Dendritic cell treated with granulocyte-macrophage colony-stimulating factor and Interleukin-4, amounts not matched to agents 40 ng/mL and 50 ng/mL, for 4 days (primary cell): ENCODE measurements at regions of chr6 and their contacts with region 1.

Region 1: DNA sequence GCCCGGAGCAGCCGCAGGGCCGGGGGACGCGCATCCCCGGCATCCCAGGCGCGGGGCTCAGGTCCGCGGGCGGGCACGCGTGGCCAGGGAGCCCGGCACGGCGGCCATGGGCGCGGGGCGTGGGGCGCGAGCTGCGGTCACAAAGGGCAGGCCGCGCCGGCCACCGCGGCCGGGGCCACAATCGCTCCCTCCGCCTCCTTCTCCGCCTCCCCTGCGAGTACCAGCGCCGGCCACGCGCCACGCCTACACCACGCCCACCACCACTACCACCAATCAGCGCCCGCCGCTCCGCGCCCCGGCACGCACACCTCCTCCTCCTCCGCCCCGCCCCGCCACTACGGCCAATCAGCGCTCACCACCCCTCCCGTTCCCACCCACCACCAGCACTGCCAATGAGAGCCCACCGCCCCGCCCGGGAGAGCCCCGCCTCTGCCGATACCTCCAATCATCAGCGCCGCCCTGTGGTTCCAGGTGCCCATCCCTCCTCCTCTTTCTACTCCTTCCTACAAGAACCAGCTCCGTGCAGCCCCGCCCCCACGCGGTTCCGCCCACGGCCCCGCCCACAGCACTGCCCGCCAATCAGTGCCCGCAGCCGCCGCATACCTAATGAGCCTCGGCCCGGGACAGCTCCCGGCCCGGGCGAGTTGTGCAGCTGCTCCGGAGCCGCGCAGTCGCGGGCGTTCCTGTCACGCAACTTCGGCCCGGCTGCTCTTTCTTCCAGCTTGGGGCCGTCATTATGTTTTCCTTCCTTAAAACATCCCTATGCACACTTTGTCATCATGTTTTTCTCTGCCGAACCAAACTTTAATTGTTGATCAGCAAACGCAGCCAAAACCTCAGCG is at the start of gene RPS6KA2:
- H3K4me3 Mint-ChIP-seq: peak within 1 kb of the TSS; percentile 88
- H3K27ac Mint-ChIP-seq: peak within 1 kb of the TSS; percentile 94
- H3K4me1 Mint-ChIP-seq: peaks cover 30% of the 10 kb centered on the region
- H3K27me3 Mint-ChIP-seq: peaks cover 51% of the 10 kb centered on the region

Region 2: DNA sequence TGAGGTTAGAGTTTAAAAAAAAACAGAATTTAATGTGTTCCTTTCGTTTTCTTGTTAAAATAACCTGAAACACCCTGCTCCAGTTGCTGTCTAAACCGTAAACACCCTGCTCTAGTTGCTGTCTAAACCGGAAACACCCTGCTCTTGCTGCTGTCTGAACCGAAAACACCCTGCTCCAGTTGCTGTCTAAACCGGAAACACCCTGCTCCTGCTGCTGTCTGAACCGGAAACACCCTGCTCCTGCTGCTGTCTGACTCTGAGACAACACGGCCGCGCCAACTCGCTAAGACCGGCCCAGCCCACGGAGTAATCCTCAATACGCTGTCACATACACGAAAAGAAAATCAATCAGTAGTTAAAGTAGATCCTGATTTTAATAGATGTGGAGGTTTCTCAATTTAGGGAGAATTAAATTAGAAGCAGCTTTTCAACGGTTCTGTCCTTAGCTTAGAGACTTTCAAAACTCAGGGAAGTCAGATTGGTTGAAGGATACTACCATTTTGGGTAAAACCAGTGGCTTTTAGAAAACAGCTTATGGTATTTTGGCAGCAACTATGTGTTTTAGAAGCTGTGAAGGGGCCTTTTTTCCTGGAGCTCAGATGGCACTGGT is 139.1 kb before region 1 on chr6:
- intact Hi-C with region 1: loop called (anchors 2 kb)
- H3K4me3 Mint-ChIP-seq: peak overlapping the region; percentile 44
- H3K27ac Mint-ChIP-seq: peak overlapping the region; percentile 85
- H3K4me1 Mint-ChIP-seq: peaks cover 6% of the 10 kb centered on the region
- H3K27me3 Mint-ChIP-seq: no peaks in the 10 kb centered on the region

Region 3: GRCh38 chr6:166671434-166672081 is 44.3 kb after region 1 on chr6:
- intact Hi-C with region 1: no loop called
- H3K4me3 Mint-ChIP-seq: no peak overlapping the region
- H3K27ac Mint-ChIP-seq: no peak overlapping the region
- H3K4me1 Mint-ChIP-seq: no peaks in the 10 kb centered on the region
- H3K27me3 Mint-ChIP-seq: peaks cover 38% of the 10 kb centered on the region

Region 4: DNA sequence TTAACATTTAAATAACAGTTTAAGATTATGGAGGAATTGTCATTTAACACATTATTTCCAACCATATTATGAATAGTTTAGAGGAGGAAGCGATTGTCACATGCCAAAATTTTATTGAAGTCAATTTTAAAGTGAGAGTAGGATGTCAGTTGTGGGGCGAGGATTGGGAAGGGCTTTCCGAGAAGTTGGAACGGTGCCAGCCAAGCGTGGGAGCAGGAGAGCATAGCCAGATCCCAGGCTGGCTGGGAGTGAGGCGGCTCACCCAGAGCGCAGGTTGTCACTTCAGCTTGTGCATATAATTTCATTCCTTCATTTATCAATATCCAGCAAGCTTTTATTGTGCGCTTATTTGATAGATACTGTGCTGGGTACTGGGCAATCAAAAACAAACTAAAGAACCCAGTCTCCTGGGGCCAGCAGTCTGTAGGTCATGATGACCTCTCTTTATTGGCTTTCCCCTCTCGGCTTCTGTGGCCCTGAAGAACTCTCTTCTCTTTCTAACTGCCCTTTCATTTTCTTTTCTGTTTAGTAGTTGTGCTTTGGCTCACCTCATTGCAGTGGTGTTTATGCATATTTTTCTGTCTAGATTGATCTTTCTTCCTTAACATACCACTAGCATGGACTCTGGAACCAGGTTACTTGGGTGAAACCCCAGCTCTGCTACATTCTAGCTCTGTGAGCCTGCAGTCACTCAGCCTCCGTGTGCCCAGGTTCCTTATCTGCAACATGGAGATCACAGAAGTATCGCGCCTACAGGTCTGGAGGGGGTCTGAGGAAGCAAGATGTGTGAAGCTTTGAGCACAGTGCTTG is 378.3 kb after region 1 on chr6:
- intact Hi-C with region 1: loop called (anchors 10 kb)
- H3K4me3 Mint-ChIP-seq: no peak overlapping the region
- H3K27ac Mint-ChIP-seq: no peak overlapping the region
- H3K4me1 Mint-ChIP-seq: peaks cover 15% of the 10 kb centered on the region
- H3K27me3 Mint-ChIP-seq: no peaks in the 10 kb centered on the region